ENCODE measurements at regions of chr10 and their contacts with region 1.

Region 1: GRCh38 chr10:12902135-12902572 is 99.4 kb downstream of the CCDC3 start:
- DNase-seq: no peak
- H3K4me3 ChIP-seq: no peak overlapping the region
- H3K27ac ChIP-seq: no peak overlapping the region
- H3K4me1 ChIP-seq: no peaks in the 10 kb centered on the region
- H3K27me3 ChIP-seq: no peaks in the 10 kb centered on the region
- CTCF ChIP-seq: peak; percentile 28 to 83 (median 74)
- EP300 ChIP-seq: no peak
- POLR2A ChIP-seq: no peak

Region 2: GRCh38 chr10:12729885-12730284 is 172.3 kb before region 1 on chr10:
- intact Hi-C with region 1: loop called (anchors 5 kb)
- DNase-seq: no peak
- H3K4me3 ChIP-seq: no peak overlapping the region
- H3K27ac ChIP-seq: no peak overlapping the region
- H3K4me1 ChIP-seq: peaks cover 0 to 32% (median 26%) of the 10 kb centered on the region in 4 donors
- H3K27me3 ChIP-seq: no peaks in the 10 kb centered on the region
- CTCF ChIP-seq: no peak
- EP300 ChIP-seq: no peak
- POLR2A ChIP-seq: no peak

Region 3: GRCh38 chr10:12782537-12782936 is 119.6 kb before region 1 on chr10:
- intact Hi-C with region 1: loop called (anchors 1 kb)
- DNase-seq: peak; percentile 74
- H3K4me3 ChIP-seq: no peak overlapping the region
- H3K27ac ChIP-seq: peak overlapping the region in 2 of 4 donors; percentile 47 to 52
- H3K4me1 ChIP-seq: peaks cover 0 to 14% (median 0%) of the 10 kb centered on the region in 4 donors
- H3K27me3 ChIP-seq: no peaks in the 10 kb centered on the region
- CTCF ChIP-seq: peak; percentile 16 to 62 (median 54)
- EP300 ChIP-seq: no peak
- POLR2A ChIP-seq: no peak